ENCODE measurements at regions of chr9 and their contacts with region 1.

Region 1: GRCh38 chr9:34331196-34331595 is 1.8 kb downstream of the NUDT2 start:
- DNase-seq: no peak
- H3K4me3 ChIP-seq: no peak overlapping the region
- H3K27ac ChIP-seq: no peak overlapping the region
- H3K4me1 ChIP-seq: no peaks in the 10 kb centered on the region
- H3K27me3 ChIP-seq: no peaks in the 10 kb centered on the region
- CTCF ChIP-seq: no peak

Region 2: DNA sequence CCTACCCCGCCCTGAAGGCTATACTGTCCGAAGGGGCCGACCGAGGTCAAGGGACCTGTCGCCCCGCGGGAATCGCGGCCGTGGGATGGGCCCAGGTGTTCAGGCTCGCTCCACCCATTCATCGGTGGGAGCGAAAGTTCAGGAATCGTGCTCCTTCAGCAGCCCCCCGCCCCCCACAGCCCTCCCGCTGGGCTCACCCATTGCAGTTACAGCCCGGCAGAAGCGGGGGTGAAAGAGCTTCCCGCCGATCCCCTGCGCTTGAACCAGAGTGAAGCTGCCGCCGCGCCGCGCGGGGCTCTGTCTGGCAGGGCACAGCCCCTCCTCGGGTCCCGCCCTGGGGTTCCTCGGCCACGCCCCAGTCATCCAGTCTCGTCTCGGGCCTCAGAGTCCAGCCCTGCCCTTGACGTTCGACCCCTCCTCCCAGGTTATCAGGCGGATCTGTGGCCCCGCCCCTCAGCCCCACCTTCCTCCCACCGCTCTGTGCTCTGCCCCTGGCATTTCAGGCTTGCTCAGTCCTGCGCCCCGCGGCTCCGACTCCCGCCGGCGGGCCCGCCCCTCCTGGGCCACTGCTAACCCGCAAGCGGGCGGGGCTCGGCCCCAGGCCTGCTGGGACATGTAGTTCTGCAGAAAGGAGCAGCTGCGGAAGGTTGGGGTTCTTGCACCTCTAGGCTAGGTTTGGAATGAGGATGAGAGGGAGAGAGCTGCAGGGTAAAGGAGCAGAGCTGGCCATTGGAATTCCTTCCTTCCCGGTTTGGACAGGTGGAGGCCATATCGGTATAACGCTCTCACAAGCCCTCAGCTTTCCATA is 45.6 kb after region 1 on chr9 and contains the start of gene MYORG:
- intact Hi-C with region 1: loop called (anchors 1 kb)
- DNase-seq: peak; percentile 99
- H3K4me3 ChIP-seq: peak within 1 kb of the TSS; percentile 63
- H3K27ac ChIP-seq: peak within 1 kb of the TSS; percentile 94
- H3K4me1 ChIP-seq: peaks cover 8% of the 10 kb centered on the region
- H3K27me3 ChIP-seq: no peaks in the 10 kb centered on the region
- CTCF ChIP-seq: no peak
- total RNA-seq, gene MYORG: 57.0 to 68.6 TPM

Measured in colonic mucosa (tissue), 4 donors.